ENCODE measurements at regions of chr11 and their contacts with region 1.

Region 1: GRCh38 chr11:26753723-26754504 is 32.1 kb upstream of the SLC5A12 start:
- DNase-seq: peak in 6 of 10 donors; percentile 27 to 59 (median 31)

Region 2: DNA sequence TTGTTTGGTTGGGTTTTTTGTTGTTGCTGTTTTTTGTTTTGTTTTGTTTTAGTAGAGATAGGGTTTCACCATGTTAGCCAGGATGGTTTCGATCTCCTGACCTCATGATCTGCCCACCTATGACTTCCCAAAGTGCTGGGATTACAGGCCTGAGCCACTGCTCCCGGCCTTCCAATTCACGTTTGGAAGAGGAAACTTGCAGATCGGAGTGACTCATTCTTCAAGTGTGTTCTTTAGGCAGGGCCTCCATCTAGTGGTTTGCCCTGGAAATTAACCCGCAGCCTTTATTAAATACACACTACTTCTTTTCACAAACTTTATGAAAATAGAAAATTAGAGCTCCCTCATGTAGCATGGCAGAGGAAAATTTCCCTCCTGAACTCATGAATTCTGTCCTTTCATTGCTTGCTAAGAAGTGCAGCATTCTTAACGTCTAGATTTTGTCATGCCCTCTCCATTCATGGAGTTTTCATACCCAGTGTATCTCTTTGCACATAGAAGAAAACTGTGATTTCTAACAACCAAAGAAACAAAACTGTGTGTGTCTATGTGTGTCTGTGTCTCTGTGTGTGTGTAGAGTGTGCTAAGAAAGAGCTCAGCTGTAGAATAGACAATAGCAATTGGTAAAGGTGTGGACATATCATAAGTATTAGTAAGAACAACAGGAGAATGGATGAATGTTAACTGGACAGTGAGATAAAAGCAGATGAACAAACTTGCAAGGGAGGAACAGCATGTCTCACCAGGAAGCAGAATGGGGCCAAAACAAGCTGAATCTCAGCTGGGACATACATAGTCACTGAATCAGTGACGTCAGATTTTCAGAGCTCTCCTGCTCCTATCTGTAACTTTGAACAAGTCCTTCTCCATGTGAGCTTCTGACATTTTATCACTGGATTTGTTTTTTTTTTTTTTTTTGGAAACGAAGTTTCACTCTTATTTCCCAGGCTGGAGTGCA is 405.1 kb after region 1 on chr11:
- intact Hi-C with region 1: loop called (anchors 2 kb)
- DNase-seq: peak in 6 of 10 donors; percentile 21 to 84 (median 49)

Region 3: DNA sequence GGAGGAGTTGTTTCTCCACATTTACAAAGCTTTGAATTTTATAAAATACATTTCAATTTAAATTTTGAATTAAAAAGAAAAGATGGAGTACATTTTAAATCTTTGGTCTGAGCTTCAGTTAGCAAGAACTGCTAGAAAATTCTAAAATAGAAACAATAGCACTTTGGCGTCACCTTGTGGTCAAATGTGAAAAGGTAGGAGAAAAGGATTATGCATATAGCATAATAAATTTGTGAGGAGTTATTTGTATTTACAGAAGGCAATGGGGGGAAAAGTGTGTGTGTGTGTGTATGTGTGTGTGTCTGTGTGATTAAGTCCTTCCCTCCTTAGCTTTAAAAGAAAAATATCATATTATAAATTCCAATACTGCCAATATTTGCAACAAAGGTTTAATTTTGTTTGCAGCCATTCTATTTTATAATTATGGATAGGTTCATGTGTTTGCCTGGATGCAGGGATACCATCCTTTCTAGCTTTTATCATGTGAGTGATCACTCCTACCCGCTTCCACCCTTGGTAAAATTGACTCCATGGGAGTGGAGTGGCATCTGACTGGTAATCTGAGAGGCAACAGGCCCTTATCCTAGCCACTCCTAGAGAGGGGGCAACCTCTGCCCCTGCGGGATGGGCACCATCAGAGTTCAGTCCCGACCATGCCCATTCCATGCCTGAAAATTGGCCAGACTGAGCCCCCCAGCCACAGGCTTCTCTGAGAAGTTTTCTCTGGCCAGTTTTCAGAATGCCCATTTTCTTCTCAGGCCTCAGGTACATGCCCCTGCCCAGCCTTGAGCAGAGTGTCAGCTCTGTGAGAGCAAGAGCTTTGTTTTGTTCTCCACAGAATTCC is 732.2 kb after region 1 on chr11:
- intact Hi-C with region 1: loop called (anchors 10 kb)
- DNase-seq: peak in 2 of 10 donors; percentile 32 to 59